Activated CD4-positive, alpha-beta T cell treated with anti-CD3 and anti-CD28 coated beads, Interleukin-2, amount 10 ng/mL, durations not matched to agents 24 days and 14 days (primary cell): ENCODE measurements at regions of chr12 and their contacts with region 1.

Region 1: GRCh38 chr12:75722714-75723200 is 211.3 kb upstream of the KRR1 start:
- DNase-seq: peak; percentile 82
- H3K4me3 Mint-ChIP-seq: peak overlapping the region; percentile 34
- H3K27ac Mint-ChIP-seq: peak overlapping the region; percentile 83
- H3K4me1 Mint-ChIP-seq: peaks cover 20% of the 10 kb centered on the region
- H3K27me3 Mint-ChIP-seq: peaks cover 7% of the 10 kb centered on the region

Region 2: DNA sequence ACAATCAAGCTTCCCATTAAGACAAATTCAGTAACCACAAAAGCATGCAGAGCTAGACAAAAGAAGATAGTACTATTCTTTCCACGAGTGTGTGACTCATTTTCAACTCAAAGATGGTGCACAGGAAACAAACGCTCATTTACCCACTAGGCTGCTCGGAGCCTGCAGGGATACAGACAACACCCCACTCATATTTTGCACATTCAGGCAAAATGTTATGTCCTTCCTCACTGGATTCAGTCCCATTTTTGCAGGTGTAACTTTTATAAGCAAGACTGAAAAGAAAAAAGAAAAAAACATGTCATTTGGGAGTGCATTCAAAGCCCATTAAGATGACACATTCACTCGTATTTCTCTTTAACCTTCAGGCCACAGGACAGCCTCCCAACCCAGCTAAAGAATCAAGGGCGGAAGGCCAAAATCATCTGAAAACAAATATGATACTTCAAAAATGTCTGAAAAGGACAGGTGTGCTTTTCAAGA is 63.8 kb before region 1 on chr12:
- intact Hi-C with region 1: loop called (anchors 5 kb)
- DNase-seq: peak; percentile 66
- H3K4me3 Mint-ChIP-seq: no peak overlapping the region
- H3K27ac Mint-ChIP-seq: peak overlapping the region; percentile 35
- H3K4me1 Mint-ChIP-seq: peaks cover 21% of the 10 kb centered on the region
- H3K27me3 Mint-ChIP-seq: peaks cover 3% of the 10 kb centered on the region

Region 3: GRCh38 chr12:75738486-75738885 is 15.7 kb after region 1 on chr12:
- intact Hi-C with region 1: loop called (anchors 1 kb)
- DNase-seq: peak; percentile 64
- H3K4me3 Mint-ChIP-seq: no peak overlapping the region
- H3K27ac Mint-ChIP-seq: peak overlapping the region; percentile 59
- H3K4me1 Mint-ChIP-seq: peaks cover 17% of the 10 kb centered on the region
- H3K27me3 Mint-ChIP-seq: peaks cover 5% of the 10 kb centered on the region